WTC11 (cell line): ENCODE measurements at regions of chr2 and their contacts with region 1.

Region 1: DNA sequence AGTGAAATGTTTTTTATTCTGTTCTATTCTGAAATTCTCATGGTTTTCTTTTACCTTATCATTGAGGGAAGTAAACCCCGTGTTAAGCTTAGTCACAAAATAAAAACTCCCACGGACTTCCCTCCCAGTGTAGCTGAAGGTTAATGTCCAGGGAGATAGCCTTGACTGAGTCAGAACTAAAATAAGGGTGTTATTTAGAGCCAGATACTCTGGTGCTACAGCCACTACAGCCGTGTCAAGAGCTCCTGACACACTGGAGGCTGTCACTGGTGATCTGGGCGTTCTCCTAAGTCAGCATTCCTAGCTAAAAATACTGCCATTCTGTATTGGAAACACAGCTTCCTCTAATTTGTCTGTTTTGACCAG is 82.0 kb upstream of the RANBP2 start:
- DNase-seq: no peak
- ATAC-seq: no peak
- H3K4me3 Mint-ChIP-seq: no peak overlapping the region
- H3K27ac Mint-ChIP-seq: no peak overlapping the region
- H3K4me1 Mint-ChIP-seq: peaks cover 43% of the 10 kb centered on the region
- H3K27me3 Mint-ChIP-seq: no peaks in the 10 kb centered on the region
- CTCF ChIP-seq: no peak

Region 2: DNA sequence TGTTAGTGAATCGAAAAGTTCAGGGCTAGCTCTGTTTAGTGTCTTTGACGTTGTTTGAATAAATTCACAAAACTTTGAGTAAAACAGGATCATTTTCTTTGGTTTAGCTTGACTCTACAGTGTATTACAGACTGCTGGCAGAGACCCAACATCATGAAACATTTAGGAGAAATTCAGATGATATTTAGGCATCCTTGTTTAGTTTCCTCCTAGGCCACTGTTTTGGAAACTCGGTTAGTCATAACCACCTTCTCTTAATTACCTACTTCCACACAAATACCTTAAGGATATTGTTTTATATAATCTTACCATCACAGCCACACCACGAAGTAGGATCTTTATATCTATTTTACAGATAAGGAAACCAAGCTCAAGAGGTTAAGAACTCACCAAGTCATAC is 95.2 kb before region 1 on chr2:
- CTCF ChIA-PET with region 1: interaction called, 13 read pairs
- POLR2A ChIA-PET with region 1: no interaction called
- DNase-seq: no peak
- ATAC-seq: no peak
- H3K4me3 Mint-ChIP-seq: no peak overlapping the region
- H3K27ac Mint-ChIP-seq: no peak overlapping the region
- H3K4me1 Mint-ChIP-seq: peaks cover 20% of the 10 kb centered on the region
- H3K27me3 Mint-ChIP-seq: no peaks in the 10 kb centered on the region
- CTCF ChIP-seq: no peak

Region 3: DNA sequence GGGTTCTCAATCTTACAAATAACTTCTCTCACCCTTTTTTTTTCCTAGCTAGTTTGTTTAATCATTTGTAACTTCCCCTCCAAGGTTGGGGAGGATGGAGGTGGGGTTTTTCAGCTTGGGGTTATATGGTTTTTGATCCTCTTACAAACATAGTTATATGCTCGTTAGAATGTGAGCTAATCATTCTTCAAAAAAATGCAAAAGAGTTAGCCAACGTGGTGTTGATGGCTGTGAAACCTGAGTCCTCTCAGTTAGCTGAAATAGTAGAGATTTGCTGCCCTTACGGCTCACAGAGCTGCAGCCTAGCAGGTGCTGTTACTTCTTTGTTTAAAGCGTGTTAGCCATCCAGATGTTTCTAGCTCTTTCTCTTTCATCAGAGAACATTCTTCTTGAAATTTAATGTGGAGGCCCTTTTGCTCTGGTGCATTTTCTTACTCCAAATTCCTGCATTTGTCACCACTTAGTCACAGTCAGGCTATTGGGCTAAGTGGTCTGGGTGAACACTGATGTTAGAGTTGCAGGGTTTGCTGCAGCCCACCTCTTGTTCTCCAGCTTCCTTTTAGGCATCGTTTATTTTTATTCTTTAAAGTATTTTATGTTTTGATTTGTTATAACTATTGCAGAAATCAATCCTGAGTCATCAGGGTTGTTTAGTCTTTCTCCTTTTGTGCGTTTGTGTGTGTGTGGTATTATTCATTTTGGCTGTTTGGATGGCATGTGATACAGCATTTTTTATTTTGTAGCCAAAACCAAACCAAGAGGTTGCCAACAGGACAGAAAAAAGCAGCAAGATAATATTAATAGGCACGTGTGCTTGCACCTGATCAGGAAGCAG is 61.9 kb before region 1 on chr2:
- CTCF ChIA-PET with region 1: interaction called, 15 read pairs
- POLR2A ChIA-PET with region 1: no interaction called
- DNase-seq: no peak
- ATAC-seq: peak; percentile 63
- H3K4me3 Mint-ChIP-seq: peak overlapping the region; percentile 41; the same call in 1 of the 2 replicates
- H3K27ac Mint-ChIP-seq: peak overlapping the region; percentile 81
- H3K4me1 Mint-ChIP-seq: peaks cover 44% of the 10 kb centered on the region
- H3K27me3 Mint-ChIP-seq: no peaks in the 10 kb centered on the region
- CTCF ChIP-seq: no peak

Region 4: GRCh38 chr2:108583903-108584520 is 53.3 kb before region 1 on chr2:
- CTCF ChIA-PET with region 1: interaction called, 42 read pairs
- POLR2A ChIA-PET with region 1: no interaction called
- DNase-seq: peak; percentile 40
- ATAC-seq: peak; percentile 91
- H3K4me3 Mint-ChIP-seq: no peak overlapping the region
- H3K27ac Mint-ChIP-seq: peak overlapping the region; percentile 54; the same call in 1 of the 2 replicates
- H3K4me1 Mint-ChIP-seq: peaks cover 27% of the 10 kb centered on the region
- H3K27me3 Mint-ChIP-seq: no peaks in the 10 kb centered on the region
- CTCF ChIP-seq: peak; percentile 49; the same call in 1 of the 2 replicates

Region 5: GRCh38 chr2:108594132-108594981 is 42.9 kb before region 1 on chr2:
- CTCF ChIA-PET with region 1: interaction called, 40 read pairs
- POLR2A ChIA-PET with region 1: no interaction called
- DNase-seq: no peak
- ATAC-seq: no peak; the same call in 1 of the 2 replicates
- H3K4me3 Mint-ChIP-seq: no peak overlapping the region
- H3K27ac Mint-ChIP-seq: peak overlapping the region; percentile 59; the same call in 1 of the 2 replicates
- H3K4me1 Mint-ChIP-seq: peaks cover 35% of the 10 kb centered on the region
- H3K27me3 Mint-ChIP-seq: no peaks in the 10 kb centered on the region; the same call in 1 of the 2 replicates
- CTCF ChIP-seq: no peak

Region 6: GRCh38 chr2:108607706-108608301 is 29.5 kb before region 1 on chr2:
- CTCF ChIA-PET with region 1: interaction called, 65 read pairs
- POLR2A ChIA-PET with region 1: no interaction called
- DNase-seq: peak; percentile 25
- ATAC-seq: peak; percentile 72
- H3K4me3 Mint-ChIP-seq: no peak overlapping the region
- H3K27ac Mint-ChIP-seq: no peak overlapping the region; the same call in 1 of the 2 replicates
- H3K4me1 Mint-ChIP-seq: peaks cover 24% of the 10 kb centered on the region
- H3K27me3 Mint-ChIP-seq: no peaks in the 10 kb centered on the region
- CTCF ChIP-seq: no peak

Region 7: DNA sequence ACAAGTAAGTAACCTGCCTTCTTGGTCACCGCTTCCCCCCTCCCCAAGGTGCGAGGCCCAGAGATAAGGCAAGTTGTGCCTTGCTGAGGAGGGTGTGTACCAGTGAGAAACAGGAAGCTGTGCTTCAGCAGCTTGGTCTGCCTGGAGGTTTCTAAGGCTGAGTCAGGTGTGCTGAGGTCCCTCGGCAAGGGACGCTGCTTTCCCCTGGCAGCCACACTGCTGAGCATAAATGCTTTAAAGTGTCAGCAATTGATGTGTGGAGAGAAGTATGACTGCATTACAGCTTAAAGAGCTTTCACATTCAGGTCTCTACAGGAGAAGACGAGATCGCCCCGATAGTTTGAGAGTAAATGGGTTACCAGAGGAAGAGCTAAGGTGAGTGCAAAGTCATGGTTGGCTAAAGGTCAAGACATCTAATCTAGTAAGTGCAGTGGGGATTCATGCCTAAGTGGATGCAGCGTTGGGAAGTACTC is 16.2 kb before region 1 on chr2:
- CTCF ChIA-PET with region 1: interaction called, 46 read pairs
- POLR2A ChIA-PET with region 1: interaction called, 7 read pairs
- DNase-seq: peak; percentile 37
- ATAC-seq: peak; percentile 92
- H3K4me3 Mint-ChIP-seq: peak overlapping the region; percentile 71
- H3K27ac Mint-ChIP-seq: peak overlapping the region; percentile 99
- H3K4me1 Mint-ChIP-seq: peaks cover 72% of the 10 kb centered on the region
- H3K27me3 Mint-ChIP-seq: no peaks in the 10 kb centered on the region
- CTCF ChIP-seq: no peak

Region 8: DNA sequence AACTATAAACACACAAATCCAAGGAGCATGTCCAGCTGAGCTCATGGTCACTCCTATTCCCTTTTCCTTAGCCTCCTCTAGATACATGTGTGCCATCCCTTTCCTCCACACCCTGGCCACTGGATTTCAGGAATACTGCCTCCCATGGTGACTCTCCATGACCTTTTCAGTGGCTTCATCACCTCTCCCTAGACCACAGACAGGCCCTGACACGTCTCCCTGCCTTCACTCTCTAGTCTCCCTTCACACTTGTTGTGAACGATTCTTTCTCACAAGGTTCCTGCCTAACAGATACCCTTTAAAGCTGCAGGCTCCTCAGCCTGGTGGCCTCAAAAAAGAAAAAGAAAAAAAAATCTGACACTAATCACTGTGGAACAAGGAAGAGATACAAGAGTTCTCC is 212.0 kb after region 1 on chr2:
- CTCF ChIA-PET with region 1: no interaction called
- POLR2A ChIA-PET with region 1: no interaction called
- DNase-seq: no peak
- ATAC-seq: no peak
- H3K4me3 Mint-ChIP-seq: no peak overlapping the region
- H3K27ac Mint-ChIP-seq: peak overlapping the region; percentile 84
- H3K4me1 Mint-ChIP-seq: 0 out of 2 replicates have a peak, but pooled peaks cover 3% of the 10 kb centered on the region
- H3K27me3 Mint-ChIP-seq: no peaks in the 10 kb centered on the region
- CTCF ChIP-seq: no peak

Region 9: DNA sequence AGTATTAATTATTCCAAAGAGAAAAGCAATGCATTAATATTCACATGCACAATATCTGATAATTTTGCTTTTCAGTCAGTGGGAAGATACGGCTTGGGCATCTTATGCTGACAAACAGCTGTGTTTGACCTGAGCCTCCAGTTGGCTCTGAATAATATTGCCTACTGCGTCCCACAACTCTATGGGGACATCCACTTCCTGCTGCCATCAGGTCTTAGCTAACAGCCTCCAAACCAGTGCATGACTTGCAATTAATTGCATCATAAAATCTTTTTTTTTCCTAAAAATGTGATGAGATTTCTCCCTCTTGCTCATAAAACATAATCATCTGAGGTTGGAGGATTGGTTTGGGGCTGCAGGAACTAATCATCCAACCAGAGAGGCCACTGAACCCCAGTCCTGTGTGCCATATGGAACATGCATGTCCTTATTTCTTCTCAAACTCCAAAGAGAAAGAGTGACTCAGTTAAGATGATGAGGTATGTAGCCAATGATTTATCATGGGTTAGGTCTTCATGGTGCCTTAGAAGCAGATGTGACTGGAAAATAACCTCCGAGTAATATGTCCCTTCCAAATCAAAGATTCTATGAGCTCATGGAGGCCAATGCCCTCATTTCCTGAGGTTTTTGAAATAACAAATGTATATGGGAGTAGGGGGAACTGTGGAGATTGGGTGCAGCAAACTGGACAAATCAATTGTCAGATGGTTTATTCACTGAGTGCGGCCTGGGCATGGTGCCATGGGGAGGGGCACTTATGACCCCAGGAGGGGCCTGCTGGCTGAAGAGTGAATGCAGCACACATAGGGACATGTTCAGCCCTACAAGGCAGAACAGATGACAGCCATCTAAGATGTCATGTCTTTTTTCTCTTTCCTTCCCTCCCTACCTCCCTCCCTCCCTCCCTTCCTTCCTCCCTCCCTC is 312.3 kb after region 1 on chr2:
- CTCF ChIA-PET with region 1: no interaction called
- POLR2A ChIA-PET with region 1: no interaction called
- DNase-seq: no peak
- ATAC-seq: no peak
- H3K4me3 Mint-ChIP-seq: no peak overlapping the region
- H3K27ac Mint-ChIP-seq: no peak overlapping the region
- H3K4me1 Mint-ChIP-seq: no peaks in the 10 kb centered on the region
- H3K27me3 Mint-ChIP-seq: peaks cover 5% of the 10 kb centered on the region
- CTCF ChIP-seq: no peak